ENCODE measurements at regions of chr1 and their contacts with region 1.

Region 1: DNA sequence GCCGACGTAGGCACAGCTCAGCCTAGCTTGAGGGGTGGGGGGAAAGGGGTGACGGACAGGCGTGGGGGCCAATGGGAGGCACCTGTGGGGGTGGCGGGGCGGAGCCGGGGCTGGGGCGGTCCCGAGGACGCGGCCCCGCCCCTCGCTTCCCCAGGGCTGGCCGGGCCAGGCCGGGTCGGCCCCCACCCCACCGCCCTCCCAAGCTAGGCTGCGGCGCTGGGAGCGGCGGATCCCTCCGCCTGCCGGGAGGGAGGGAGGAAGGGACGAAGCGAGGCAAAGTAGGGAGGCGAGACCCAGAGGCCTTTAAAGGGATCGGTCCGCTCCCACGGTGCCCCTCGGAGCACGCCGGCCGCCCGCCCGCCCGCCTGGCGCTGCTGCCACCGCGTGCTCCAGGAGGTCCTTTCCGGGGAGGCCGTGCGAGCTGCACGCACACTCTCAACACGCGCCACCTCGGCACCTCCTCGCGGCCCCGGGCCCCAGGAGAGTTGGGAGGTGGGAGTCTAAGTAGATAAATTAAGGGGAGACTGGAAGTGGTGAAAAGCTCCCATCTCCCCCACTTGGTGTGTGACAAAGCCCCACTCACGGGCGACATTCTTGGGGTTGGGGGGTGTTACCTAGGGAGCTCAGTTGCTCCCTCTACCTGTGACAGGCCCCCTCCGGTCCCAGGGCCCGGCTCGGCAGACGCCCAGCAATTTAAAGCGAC is 373 bp upstream of the MEF2D start:
- DNase-seq: peak; percentile 89
- H3K4me3 Mint-ChIP-seq: peak overlapping the region; percentile 86
- H3K27ac Mint-ChIP-seq: peak overlapping the region; percentile 90
- H3K4me1 Mint-ChIP-seq: peaks cover 62% of the 10 kb centered on the region
- H3K27me3 Mint-ChIP-seq: no peaks in the 10 kb centered on the region

Region 2: DNA sequence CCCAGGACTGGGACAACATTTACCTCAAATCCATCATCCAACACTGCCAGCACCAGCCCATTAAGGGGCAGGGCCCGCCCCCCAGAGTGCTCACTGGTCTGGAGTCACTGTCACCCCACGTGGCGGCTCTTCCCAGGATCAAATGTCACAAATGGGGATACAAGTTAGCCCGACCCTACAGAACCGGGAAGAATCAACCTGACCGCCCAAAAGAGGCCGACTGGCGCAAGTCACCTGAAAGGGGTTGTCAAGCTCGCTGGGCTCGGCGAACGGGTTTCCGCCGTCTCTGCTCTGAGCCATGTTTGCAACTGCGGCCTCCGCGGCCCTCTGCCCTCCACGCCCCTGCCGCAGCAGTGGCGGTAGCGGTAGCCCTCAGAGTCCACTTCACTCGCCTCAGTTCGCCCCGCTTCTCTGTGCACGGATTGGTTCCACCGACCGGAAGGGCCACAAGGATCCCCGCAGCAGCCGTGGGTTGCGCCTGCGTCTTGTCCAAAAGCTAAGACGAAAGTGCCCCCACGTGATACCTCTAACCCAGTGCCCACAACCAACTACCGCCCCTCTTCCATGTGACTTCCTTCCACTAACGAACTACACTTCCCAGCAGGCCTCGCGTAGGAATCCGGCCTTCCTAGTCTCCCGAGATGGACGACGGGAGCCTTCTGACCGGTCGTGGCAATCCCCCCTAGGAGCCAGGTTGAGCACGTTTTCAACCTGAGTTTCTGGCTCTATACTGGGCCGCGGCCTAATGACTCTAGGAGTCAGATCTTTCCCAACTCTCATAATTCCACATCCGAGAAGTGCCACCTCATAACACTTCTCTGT is 1238.9 kb before region 1 on chr1 and contains the start of gene SCAMP3:
- intact Hi-C with region 1: loop called (anchors 5 kb)
- DNase-seq: peak; percentile 85
- H3K4me3 Mint-ChIP-seq: peak within 1 kb of the TSS; percentile 98
- H3K27ac Mint-ChIP-seq: peak within 1 kb of the TSS; percentile 90
- H3K4me1 Mint-ChIP-seq: peaks cover 21% of the 10 kb centered on the region
- H3K27me3 Mint-ChIP-seq: no peaks in the 10 kb centered on the region
- total RNA-seq, gene SCAMP3: 113 and 123 TPM in 2 replicates

Region 3: DNA sequence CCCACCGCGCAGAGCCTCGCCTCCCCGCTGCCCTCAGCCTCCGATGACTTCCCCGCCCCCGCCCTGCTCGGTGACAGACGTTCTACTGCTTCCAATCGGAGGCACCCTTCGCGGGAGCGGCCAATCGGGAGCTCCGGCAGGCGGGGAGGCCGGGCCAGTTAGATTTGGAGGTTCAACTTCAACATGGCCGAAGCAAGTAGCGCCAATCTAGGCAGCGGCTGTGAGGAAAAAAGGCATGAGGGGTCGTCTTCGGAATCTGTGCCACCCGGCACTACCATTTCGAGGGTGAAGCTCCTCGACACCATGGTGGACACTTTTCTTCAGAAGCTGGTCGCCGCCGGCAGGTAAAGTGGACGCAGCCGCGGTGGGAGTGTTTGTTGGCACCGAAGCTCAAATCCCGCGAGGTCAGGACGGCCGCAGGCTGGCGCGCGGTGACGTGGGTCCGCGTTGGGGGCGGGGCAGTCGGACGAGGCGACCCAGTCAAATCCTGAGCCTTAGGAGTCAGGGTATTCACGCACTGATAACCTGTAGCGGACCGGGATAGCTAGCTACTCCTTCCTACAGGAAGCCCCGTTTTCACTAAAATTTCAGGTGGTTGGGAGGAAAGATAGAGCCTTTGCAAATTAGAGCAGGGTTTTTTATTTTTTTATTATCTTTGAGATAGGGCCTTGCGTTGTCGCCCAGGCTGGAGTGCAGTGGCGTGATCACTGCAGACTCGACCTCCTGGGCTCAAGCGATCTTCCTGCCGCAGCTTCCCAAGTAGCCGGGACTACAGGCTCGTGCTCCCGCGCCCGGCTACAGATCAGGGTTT is 287.9 kb before region 1 on chr1 and contains the start of gene PMF1:
- intact Hi-C with region 1: loop called (anchors 10 kb)
- DNase-seq: peak; percentile 95
- H3K4me3 Mint-ChIP-seq: peak within 1 kb of the TSS; percentile 93
- H3K27ac Mint-ChIP-seq: peak within 1 kb of the TSS; percentile 98
- H3K4me1 Mint-ChIP-seq: peaks cover 31% of the 10 kb centered on the region
- H3K27me3 Mint-ChIP-seq: no peaks in the 10 kb centered on the region
- total RNA-seq, gene PMF1: 115 and 117 TPM in 2 replicates

Region 4: GRCh38 chr1:156480411-156481192 is 20.3 kb before region 1 on chr1:
- intact Hi-C with region 1: loop called (anchors 2 kb)
- DNase-seq: peak; percentile 59
- H3K4me3 Mint-ChIP-seq: no peak overlapping the region
- H3K27ac Mint-ChIP-seq: peak overlapping the region; percentile 80
- H3K4me1 Mint-ChIP-seq: peaks cover 44% of the 10 kb centered on the region
- H3K27me3 Mint-ChIP-seq: no peaks in the 10 kb centered on the region

Region 5: GRCh38 chr1:156524481-156524869 is 23.5 kb after region 1 on chr1:
- intact Hi-C with region 1: loop called (anchors 1 kb)
- DNase-seq: no peak
- H3K4me3 Mint-ChIP-seq: peak overlapping the region; percentile 10
- H3K27ac Mint-ChIP-seq: peak overlapping the region; percentile 81
- H3K4me1 Mint-ChIP-seq: peaks cover 34% of the 10 kb centered on the region
- H3K27me3 Mint-ChIP-seq: peaks cover 2% of the 10 kb centered on the region

Region 6: DNA sequence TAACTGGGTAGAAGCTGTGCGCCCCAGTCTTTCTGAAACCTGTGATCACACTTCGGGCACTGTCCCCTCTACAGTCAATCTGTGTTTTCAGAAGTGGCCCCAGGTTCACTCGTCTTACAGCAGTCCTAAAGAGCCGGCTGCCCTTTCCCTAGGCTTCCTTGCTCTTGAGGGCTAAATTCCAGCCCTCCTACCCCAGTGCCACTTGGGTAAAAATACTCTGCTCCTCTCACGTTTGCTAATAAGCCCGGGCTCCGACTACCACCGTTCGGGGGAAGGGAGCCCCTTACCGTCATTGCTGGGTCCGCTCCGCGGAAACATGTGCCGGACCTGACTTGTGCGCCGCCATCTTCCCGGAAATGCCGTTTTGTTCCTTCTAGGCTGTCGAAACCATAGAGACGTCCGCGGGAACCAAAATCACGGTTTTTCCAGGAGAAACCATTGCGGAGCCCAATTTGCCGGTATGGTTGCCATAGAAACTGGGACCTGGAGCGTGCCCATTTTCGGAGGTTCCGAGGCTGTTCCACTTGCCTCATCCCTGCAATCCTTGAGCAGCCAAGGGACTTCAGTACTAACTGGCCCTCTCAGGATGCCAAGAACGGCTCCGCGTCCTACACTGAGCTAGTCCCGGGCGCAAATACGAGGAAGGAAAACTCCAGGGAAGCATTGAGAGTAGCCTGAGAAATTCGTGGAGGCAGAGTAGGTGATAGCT is 100.3 kb after region 1 on chr1 and contains the start of gene GPATCH4:
- intact Hi-C with region 1: loop called (anchors 2 kb)
- DNase-seq: peak; percentile 72
- H3K4me3 Mint-ChIP-seq: peak within 1 kb of the TSS; percentile 100
- H3K27ac Mint-ChIP-seq: peak within 1 kb of the TSS; percentile 99
- H3K4me1 Mint-ChIP-seq: peaks cover 24% of the 10 kb centered on the region
- H3K27me3 Mint-ChIP-seq: no peaks in the 10 kb centered on the region
- total RNA-seq, gene GPATCH4: 73.7 and 80.4 TPM in 2 replicates

Region 7: DNA sequence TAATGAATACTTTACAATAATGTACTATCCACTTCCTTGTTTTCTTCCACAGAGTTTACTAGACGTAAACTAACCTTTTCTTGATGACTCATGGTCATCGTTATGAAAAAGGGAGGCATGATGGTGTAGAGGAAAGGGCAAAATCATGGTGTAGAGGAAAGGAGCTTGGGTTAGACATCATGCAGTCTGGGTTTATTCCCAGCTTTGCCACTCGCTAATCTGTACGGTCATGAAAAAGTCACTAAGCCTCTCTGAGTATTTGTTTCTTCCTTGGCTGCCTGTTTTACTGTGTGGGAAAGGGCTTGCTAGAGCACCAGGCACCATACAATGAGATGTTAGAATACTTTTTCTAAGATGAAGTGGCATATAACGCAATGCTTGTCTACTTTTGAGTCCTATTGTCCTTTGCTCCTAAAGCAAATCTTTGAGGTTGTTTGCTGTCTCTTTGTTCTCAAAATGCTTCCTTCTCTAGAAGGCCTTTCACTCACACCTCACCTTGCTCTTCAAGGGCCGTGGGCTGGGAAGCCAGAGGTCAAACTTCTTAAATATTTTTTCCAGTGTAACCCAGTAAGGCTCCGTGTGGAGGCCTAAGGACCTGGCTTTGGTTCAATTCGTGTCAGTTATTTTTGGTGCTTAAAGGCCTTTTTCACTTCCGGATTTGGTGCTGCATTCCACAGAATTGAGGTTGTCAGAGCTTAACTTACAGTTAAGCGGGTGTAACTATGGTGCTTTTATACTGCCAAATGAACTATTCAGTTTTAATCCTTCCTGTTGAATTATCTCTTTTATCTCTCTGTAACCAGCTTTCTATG is 647.2 kb after region 1 on chr1:
- intact Hi-C with region 1: loop called (anchors 10 kb)
- DNase-seq: no peak
- H3K4me3 Mint-ChIP-seq: no peak overlapping the region
- H3K27ac Mint-ChIP-seq: peak overlapping the region; percentile 74
- H3K4me1 Mint-ChIP-seq: peaks cover 70% of the 10 kb centered on the region
- H3K27me3 Mint-ChIP-seq: no peaks in the 10 kb centered on the region

Region 8: DNA sequence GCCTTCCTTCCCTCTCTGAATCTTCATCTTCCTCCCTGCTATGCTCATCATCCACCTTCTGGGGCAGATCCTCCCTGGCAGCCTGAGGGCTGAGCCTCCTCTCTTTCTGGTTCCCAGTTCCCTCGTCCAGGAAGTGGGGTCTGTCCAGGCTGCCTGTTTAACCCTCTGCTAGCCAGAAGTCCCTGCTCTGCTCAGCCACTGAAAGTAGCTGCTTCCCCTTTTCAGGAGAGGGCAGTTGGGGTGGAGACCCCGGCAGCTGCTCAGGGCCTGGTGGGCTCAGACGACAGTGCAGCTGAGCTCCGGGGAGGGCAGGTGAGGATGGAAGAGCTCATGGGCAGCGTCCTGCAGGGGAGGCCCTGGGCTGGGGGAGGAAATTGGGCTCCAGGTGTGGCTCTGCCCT is 680.3 kb after region 1 on chr1:
- intact Hi-C with region 1: no loop called
- DNase-seq: no peak
- H3K4me3 Mint-ChIP-seq: no peak overlapping the region
- H3K27ac Mint-ChIP-seq: no peak overlapping the region
- H3K4me1 Mint-ChIP-seq: no peaks in the 10 kb centered on the region
- H3K27me3 Mint-ChIP-seq: peaks cover 29% of the 10 kb centered on the region

Measured in activated T-helper 2 cell treated with anti-CD3 and anti-CD28 coated beads, Interferon-gamma antibody, Interleukin-2, Interleukin-4, amounts not matched to agents 10 μg/mL and 5 μg/mL and 100 μg/mL, durations not matched to agents 14 hours and 24 hours and 36 hours (primary cell).